ENCODE measurements at regions of chr12 and their contacts with region 1.

Region 1: GRCh38 chr12:54398995-54399793 is 14.7 kb upstream of the ZNF385A start:
- DNase-seq: peak; percentile 67 to 93 (median 85)
- ATAC-seq: peak; percentile 84 to 93 (median 89)
- H3K4me3 ChIP-seq: no peak overlapping the region
- H3K4me3 Mint-ChIP-seq: no peak overlapping the region
- H3K27ac ChIP-seq: no peak overlapping the region
- H3K27ac Mint-ChIP-seq: peak overlapping the region; percentile 35 to 70
- H3K4me1 ChIP-seq: peaks cover 0 to 13% of the 10 kb centered on the region in 2 experiments
- H3K4me1 Mint-ChIP-seq: peaks cover 10 to 16% (median 13%) of the 10 kb centered on the region in 3 donors
- H3K27me3 ChIP-seq: no peaks in the 10 kb centered on the region
- H3K27me3 Mint-ChIP-seq: no peaks in the 10 kb centered on the region

Region 2: GRCh38 chr12:54352022-54352531 is 47.1 kb before region 1 on chr12:
- CTCF ChIA-PET with region 1: no interaction called
- POLR2A ChIA-PET with region 1: no interaction called
- DNase-seq: peak in 13 of 35 experiments; percentile 9 to 48 (median 20)
- ATAC-seq: peak; percentile 71 to 91 (median 76)
- H3K4me3 ChIP-seq: peak overlapping the region; percentile 29 to 34
- H3K4me3 Mint-ChIP-seq: peak overlapping the region; percentile 63 to 84 (median 73)
- H3K27ac ChIP-seq: peak overlapping the region; percentile 17
- H3K27ac Mint-ChIP-seq: peak overlapping the region; percentile 77 to 80
- H3K4me1 ChIP-seq: peaks cover 0 to 9% of the 10 kb centered on the region in 2 experiments
- H3K4me1 Mint-ChIP-seq: peaks cover 16 to 18% (median 18%) of the 10 kb centered on the region in 3 donors
- H3K27me3 ChIP-seq: no peaks in the 10 kb centered on the region
- H3K27me3 Mint-ChIP-seq: no peaks in the 10 kb centered on the region

Region 3: GRCh38 chr12:54411391-54412241 is 12.4 kb after region 1 on chr12:
- CTCF ChIA-PET with region 1: interaction called, 19 to 41 read pairs
- POLR2A ChIA-PET with region 1: interaction called, 4 read pairs
- DNase-seq: peak in 31 of 35 experiments; percentile 27 to 70 (median 52)
- ATAC-seq: peak; percentile 19 to 45 (median 42)
- H3K4me3 ChIP-seq: peak overlapping the region; percentile 47 to 79
- H3K4me3 Mint-ChIP-seq: peak overlapping the region; percentile 75 to 81 (median 76)
- H3K27ac ChIP-seq: peak overlapping the region; percentile 97
- H3K27ac Mint-ChIP-seq: peak overlapping the region; percentile 96 to 97
- H3K4me1 ChIP-seq: peaks cover 39 to 81% of the 10 kb centered on the region in 2 experiments
- H3K4me1 Mint-ChIP-seq: peaks cover 77 to 82% (median 82%) of the 10 kb centered on the region in 3 donors
- H3K27me3 ChIP-seq: no peaks in the 10 kb centered on the region
- H3K27me3 Mint-ChIP-seq: no peaks in the 10 kb centered on the region

Region 4: DNA sequence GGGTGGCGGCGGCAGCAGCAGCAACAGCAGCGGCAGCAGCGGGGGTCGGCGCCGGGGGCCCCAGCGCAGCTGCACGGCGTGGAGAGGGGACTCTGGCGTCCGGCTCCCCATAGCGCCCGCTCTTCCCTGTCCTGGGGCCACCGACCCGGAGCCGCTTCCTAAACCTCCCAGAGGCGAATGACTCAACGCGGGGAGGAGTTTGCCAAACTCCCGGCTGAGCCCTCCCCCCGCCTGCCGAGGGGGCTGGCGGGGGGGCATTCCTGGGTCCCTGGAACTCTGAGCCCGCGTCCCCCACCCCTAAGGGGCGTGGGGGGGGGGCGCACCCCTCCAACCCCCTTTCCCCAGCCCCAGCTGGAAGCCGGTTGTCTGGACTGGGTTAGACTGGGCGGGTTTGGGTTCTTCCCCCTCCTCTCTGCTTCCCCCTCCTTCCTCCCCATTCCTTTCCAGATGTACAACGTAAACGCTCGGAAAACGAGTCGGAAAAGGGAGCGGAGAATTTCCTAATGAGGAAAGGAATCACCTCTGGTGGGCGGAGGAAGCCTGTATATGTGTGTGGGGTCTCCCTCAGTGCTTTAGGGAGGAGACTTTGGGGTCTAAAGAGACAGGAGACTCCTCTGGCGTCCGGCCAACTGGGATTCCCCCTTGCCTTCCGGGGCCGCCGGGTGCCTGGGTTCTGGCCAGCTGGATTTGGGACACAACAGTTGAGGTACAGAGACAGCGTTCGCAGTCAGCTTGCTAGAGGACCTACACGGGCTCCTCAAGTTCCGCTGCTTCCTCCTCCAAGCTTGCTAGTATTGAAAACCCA is 20.1 kb after region 1 on chr12 and contains the start of gene ITGA5:
- CTCF ChIA-PET with region 1: interaction called, 19 to 40 read pairs
- POLR2A ChIA-PET with region 1: interaction called, 4 to 7 read pairs
- DNase-seq: peak in 7 of 35 experiments; percentile 20 to 65 (median 44)
- ATAC-seq: peak; percentile 20 to 51 (median 37)
- H3K4me3 ChIP-seq: peak within 1 kb of the TSS; percentile 83 to 94
- H3K4me3 Mint-ChIP-seq: peak within 1 kb of the TSS; percentile 81 to 97 (median 95)
- H3K27ac ChIP-seq: peak within 1 kb of the TSS; percentile 91
- H3K27ac Mint-ChIP-seq: peak within 1 kb of the TSS; percentile 97 to 98
- H3K4me1 ChIP-seq: peaks cover 29 to 61% of the 10 kb centered on the region in 2 experiments
- H3K4me1 Mint-ChIP-seq: peaks cover 53 to 69% (median 64%) of the 10 kb centered on the region in 3 donors
- H3K27me3 ChIP-seq: peaks cover 0 to 14% of the 10 kb centered on the region in 2 experiments
- H3K27me3 Mint-ChIP-seq: no peaks in the 10 kb centered on the region
- total RNA-seq, gene ITGA5: 58.6 to 183 (median 169) TPM

Region 5: DNA sequence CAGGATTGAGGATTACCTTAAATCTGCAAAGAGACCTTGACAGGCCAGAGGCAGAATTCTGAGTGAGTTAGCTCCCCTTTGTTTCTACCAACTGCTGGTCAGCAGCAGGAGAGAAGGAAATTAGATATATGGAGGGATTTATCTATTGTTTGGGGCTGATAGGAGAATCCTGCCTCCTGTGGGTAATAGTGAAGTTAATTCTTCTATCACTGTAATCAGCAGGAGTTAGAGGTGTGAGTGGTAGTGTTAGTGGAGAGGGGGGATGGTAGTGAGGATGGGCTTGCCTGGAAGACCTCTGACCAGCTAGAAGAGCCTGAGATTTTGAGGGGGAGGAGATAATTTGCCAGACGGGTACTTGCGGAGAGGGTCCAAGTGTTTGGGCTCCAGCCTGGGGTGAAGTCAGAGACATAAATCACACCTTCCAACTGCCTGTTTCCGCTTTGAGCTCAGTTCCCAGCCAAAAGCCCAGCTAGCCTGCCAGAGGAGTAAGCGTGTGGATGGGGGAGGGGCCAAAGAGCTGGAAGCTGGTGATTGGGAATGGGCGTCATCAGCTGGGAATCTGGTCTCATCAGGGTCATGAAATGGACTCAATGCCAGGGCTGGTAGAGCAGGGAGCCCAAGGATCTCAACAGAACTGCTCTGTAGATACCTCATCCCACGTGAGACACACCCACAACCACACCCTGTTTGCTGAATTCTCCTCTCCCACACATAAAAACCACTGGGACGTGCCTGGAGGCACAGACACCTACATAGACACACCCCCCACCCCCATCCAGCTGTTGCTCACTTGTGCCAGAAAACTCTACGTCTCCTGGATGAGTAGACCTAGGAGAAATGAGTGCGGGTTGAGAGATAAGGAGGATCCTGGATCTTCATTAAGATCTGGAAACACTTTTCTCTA is 33.0 kb after region 1 on chr12:
- CTCF ChIA-PET with region 1: interaction called, 89 to 174 read pairs
- POLR2A ChIA-PET with region 1: no interaction called
- DNase-seq: no peak
- ATAC-seq: no peak
- H3K4me3 ChIP-seq: no peak overlapping the region
- H3K4me3 Mint-ChIP-seq: no peak overlapping the region
- H3K27ac ChIP-seq: no peak overlapping the region
- H3K27ac Mint-ChIP-seq: peak overlapping the region in 1 of 2 donors; percentile 66
- H3K4me1 ChIP-seq: peaks cover 7 to 35% of the 10 kb centered on the region in 2 experiments
- H3K4me1 Mint-ChIP-seq: peaks cover 32 to 49% (median 47%) of the 10 kb centered on the region in 3 donors
- H3K27me3 ChIP-seq: peaks cover 0 to 8% of the 10 kb centered on the region in 2 experiments
- H3K27me3 Mint-ChIP-seq: peaks cover 0 to 2% of the 10 kb centered on the region in 2 donors

Region 6: GRCh38 chr12:54439521-54440255 is 40.5 kb after region 1 on chr12:
- CTCF ChIA-PET with region 1: interaction called, 89 to 174 read pairs
- POLR2A ChIA-PET with region 1: interaction called, 5 to 10 read pairs
- DNase-seq: peak in 3 of 35 experiments; percentile 24 to 75 (median 27)
- ATAC-seq: peak; percentile 81 to 87 (median 83)
- H3K4me3 ChIP-seq: no peak overlapping the region
- H3K4me3 Mint-ChIP-seq: no peak overlapping the region
- H3K27ac ChIP-seq: no peak overlapping the region
- H3K27ac Mint-ChIP-seq: peak overlapping the region in 1 of 2 donors; percentile 47
- H3K4me1 ChIP-seq: peaks cover 0 to 3% of the 10 kb centered on the region in 2 experiments
- H3K4me1 Mint-ChIP-seq: peaks cover 3 to 12% (median 4%) of the 10 kb centered on the region in 3 donors
- H3K27me3 ChIP-seq: peaks cover 0 to 3% of the 10 kb centered on the region in 2 experiments
- H3K27me3 Mint-ChIP-seq: peaks cover 0 to 1% of the 10 kb centered on the region in 2 donors

Region 7: GRCh38 chr12:54497883-54498282 is 98.7 kb after region 1 on chr12:
- CTCF ChIA-PET with region 1: interaction called, 5 to 18 read pairs
- POLR2A ChIA-PET with region 1: no interaction called
- DNase-seq: peak in 1 of 35 experiments; percentile 1
- ATAC-seq: peak in 3 of 4 experiments; percentile 1 to 13 (median 3)
- H3K4me3 ChIP-seq: peak overlapping the region; percentile 62 to 85
- H3K4me3 Mint-ChIP-seq: peak overlapping the region; percentile 97 to 99 (median 98)
- H3K27ac ChIP-seq: peak overlapping the region; percentile 50
- H3K27ac Mint-ChIP-seq: peak overlapping the region; percentile 98
- H3K4me1 ChIP-seq: peaks cover 28 to 30% of the 10 kb centered on the region in 2 experiments
- H3K4me1 Mint-ChIP-seq: peaks cover 45 to 56% (median 49%) of the 10 kb centered on the region in 3 donors
- H3K27me3 ChIP-seq: no peaks in the 10 kb centered on the region
- H3K27me3 Mint-ChIP-seq: no peaks in the 10 kb centered on the region